Upper lobe of right lung (tissue), 1 donor: ENCODE measurements at regions of chr6 and their contacts with region 1.

Region 1: DNA sequence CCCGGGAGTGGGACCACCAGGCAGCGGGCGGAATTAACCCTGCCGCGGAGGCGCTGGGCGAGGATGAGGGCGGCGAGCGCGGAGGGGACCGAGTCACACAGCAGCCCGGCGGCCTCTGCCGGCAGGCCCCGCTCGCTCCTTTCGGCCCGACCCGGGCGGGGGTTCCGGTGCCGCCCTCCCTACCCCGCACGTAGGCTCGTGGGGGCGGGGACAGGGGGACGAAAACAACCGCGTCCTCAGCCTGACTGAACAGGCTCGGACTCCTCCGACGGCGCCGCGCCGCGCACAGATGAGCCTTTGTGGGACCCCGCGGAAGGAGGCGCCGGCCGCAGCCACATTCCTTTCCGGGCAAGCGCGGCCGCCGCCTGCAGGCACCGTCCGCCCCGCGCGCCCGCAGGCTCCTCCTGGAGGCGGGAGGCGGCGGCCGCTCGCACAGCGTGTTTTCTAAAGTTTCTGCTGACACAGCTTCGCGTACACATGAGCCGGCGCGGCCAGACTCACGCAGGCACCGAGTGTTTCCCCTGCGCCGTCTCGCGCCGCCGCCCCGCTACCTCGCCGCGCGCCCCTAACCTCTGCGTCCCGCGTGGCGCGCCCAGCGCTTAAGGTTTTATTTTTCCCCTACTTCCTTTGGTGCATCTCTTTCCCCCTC is 244.3 kb downstream of the ARID1B start:
- DNase-seq: peak; percentile 96
- ATAC-seq: peak; percentile 95
- H3K4me3 ChIP-seq: peak overlapping the region; percentile 79
- H3K27ac ChIP-seq: peak overlapping the region; percentile 99
- H3K4me1 ChIP-seq: peaks cover 32% of the 10 kb centered on the region
- H3K27me3 ChIP-seq: no peaks in the 10 kb centered on the region
- CTCF ChIP-seq: peak; percentile 48

Region 2: DNA sequence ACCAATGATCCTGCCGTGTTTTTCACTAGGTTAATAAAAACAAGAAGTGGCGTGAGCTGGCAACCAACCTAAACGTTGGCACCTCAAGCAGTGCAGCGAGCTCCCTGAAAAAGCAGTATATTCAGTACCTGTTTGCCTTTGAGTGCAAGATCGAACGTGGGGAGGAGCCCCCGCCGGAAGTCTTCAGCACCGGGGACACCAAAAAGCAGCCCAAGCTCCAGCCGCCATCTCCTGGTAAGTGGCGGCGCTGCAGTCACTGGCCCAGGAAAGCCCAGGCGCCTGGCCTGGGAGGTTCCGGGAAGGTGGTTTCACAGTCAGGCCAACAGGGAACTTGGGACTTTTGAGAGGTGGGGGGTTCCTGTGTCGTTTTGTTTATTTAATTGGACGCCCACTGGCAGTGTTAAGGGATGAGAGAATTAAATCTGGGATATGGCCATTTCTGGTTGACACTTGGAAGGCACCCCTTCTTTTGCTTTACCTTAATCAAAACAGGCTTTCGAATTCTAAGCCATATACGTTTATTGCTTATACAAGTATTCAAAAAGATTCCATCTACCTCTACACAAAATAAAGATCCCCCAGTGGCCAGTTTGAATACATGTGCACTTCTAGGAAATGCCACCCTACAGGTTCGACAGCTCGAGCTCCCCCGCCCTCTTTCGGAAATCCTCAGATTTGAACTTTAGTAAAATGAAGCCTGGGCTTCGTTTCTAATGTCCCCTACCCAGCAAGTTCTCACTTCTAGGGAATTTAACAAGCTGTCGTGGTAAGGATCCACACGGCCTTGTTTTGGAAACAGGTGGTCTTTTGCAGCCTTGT is 162.9 kb after region 1 on chr6:
- intact Hi-C with region 1: loop called (anchors 10 kb)
- DNase-seq: peak; percentile 86
- ATAC-seq: peak; percentile 94
- H3K4me3 ChIP-seq: peak overlapping the region; percentile 11
- H3K27ac ChIP-seq: no peak overlapping the region
- H3K4me1 ChIP-seq: no peaks in the 10 kb centered on the region
- H3K27me3 ChIP-seq: no peaks in the 10 kb centered on the region
- CTCF ChIP-seq: peak; percentile 91

Region 3: GRCh38 chr6:157304899-157305663 is 283.6 kb after region 1 on chr6:
- intact Hi-C with region 1: no loop called
- DNase-seq: no peak
- ATAC-seq: peak; percentile 74
- H3K4me3 ChIP-seq: peak overlapping the region; percentile 17
- H3K27ac ChIP-seq: peak overlapping the region; percentile 65
- H3K4me1 ChIP-seq: peaks cover 17% of the 10 kb centered on the region
- H3K27me3 ChIP-seq: no peaks in the 10 kb centered on the region
- CTCF ChIP-seq: no peak